OCI-LY7 (cell line): ENCODE measurements at regions of chr10 and their contacts with region 1.

Region 1: DNA sequence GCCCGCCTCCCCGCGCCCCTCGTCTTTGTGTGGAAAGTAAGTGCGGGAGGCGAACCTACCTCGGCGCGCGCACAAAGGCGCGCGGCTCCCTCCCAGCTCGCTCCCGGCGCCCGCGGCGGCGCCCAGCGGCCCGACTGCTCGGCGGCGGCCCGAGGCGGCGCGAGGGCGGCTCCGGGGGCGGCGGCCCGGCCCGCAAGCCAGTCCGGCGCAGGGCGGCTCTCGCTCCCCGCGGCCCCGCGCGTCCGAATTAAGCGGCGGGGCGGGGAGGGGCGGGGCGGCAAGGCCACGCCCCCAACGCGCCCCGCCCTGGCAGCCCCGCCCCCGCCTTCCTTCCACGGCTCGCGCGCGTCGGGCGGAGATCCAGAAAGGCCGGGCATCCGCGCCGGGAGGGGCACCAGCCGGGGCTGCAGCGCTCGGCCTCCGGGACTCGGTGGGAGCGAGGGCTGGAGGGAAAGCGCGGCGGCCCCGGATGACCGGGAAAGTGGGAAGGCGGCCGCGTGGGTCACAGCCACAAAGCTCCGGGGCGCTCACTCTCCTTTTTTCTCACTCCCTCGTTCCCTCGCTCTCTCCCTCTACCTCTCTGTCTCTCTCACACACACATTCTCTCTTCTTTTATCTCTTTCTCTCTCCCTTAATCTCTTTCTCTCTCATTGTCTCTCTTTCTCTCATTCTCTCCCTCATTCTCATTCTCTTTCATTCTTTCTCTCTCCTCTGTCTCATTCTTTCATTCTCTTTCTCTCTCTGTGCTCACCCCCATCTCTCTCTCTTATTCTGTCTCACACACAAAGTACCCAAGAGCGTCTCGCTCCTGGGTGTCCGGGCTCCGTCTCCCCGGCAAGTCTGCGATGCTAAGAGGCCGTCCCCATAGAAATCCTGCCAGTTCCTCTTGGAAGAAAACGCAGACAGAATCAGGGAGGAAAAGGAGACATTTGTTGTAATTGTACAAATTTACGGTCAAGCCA is 170.2 kb downstream of the FAM107B start:
- DNase-seq: peak; percentile 88
- H3K4me3 ChIP-seq: peak overlapping the region; percentile 81
- H3K27ac ChIP-seq: peak overlapping the region; percentile 4
- H3K4me1 ChIP-seq: peaks cover 65% of the 10 kb centered on the region
- CTCF ChIP-seq: no peak

Region 2: GRCh38 chr10:14648005-14648765 is 43.7 kb after region 1 on chr10:
- CTCF ChIA-PET with region 1: no interaction called
- POLR2A ChIA-PET with region 1: interaction called, 5 read pairs
- intact Hi-C with region 1: loop called (anchors 1 kb)
- DNase-seq: peak; percentile 94
- H3K4me3 ChIP-seq: peak overlapping the region; percentile 56
- H3K27ac ChIP-seq: peak overlapping the region; percentile 90
- H3K4me1 ChIP-seq: peaks cover 80% of the 10 kb centered on the region
- CTCF ChIP-seq: no peak

Region 3: GRCh38 chr10:14751014-14751896 is 146.8 kb after region 1 on chr10:
- CTCF ChIA-PET with region 1: no interaction called
- POLR2A ChIA-PET with region 1: interaction called, 3 read pairs
- intact Hi-C with region 1: loop called (anchors 2 kb)
- DNase-seq: peak; percentile 96
- H3K4me3 ChIP-seq: peak overlapping the region; percentile 37
- H3K27ac ChIP-seq: peak overlapping the region; percentile 88
- H3K4me1 ChIP-seq: peaks cover 63% of the 10 kb centered on the region
- CTCF ChIP-seq: no peak

Region 4: GRCh38 chr10:14837757-14838581 is 233.5 kb after region 1 on chr10 and contains the starts of genes CDNF, HSPA14 and MSANTD7:
- CTCF ChIA-PET with region 1: no interaction called
- POLR2A ChIA-PET with region 1: no interaction called
- intact Hi-C with region 1: loop called (anchors 5 kb)
- DNase-seq: peak; percentile 100
- H3K4me3 ChIP-seq: peak within 1 kb of the TSS; percentile 88
- H3K27ac ChIP-seq: peak within 1 kb of the TSS; percentile 56
- H3K4me1 ChIP-seq: peaks cover 12% of the 10 kb centered on the region
- CTCF ChIP-seq: no peak
- total RNA-seq, gene CDNF: 0.72 and 3.2 TPM in 2 replicates
- total RNA-seq, gene HSPA14: 21.8 and 29.4 TPM in 2 replicates
- total RNA-seq, gene MSANTD7: 22.2 and 26.5 TPM in 2 replicates

Region 5: GRCh38 chr10:14954001-14954770 is 349.7 kb after region 1 on chr10 and contains the start of gene DCLRE1C:
- CTCF ChIA-PET with region 1: no interaction called
- POLR2A ChIA-PET with region 1: no interaction called
- intact Hi-C with region 1: loop called (anchors 5 kb)
- DNase-seq: peak; percentile 97
- H3K4me3 ChIP-seq: peak within 1 kb of the TSS; percentile 83
- H3K27ac ChIP-seq: peak within 1 kb of the TSS; percentile 96
- H3K4me1 ChIP-seq: peaks cover 57% of the 10 kb centered on the region
- CTCF ChIP-seq: no peak
- total RNA-seq, gene DCLRE1C: 45.3 and 81.3 TPM in 2 replicates